Activated CD8-positive, alpha-beta T cell treated with anti-CD3 and anti-CD28 coated beads, Interleukin-2, amount 10 ng/mL, durations not matched to agents 7 days and 5 days (primary cell): ENCODE measurements at regions of chr2 and their contacts with region 1.

Region 1: DNA sequence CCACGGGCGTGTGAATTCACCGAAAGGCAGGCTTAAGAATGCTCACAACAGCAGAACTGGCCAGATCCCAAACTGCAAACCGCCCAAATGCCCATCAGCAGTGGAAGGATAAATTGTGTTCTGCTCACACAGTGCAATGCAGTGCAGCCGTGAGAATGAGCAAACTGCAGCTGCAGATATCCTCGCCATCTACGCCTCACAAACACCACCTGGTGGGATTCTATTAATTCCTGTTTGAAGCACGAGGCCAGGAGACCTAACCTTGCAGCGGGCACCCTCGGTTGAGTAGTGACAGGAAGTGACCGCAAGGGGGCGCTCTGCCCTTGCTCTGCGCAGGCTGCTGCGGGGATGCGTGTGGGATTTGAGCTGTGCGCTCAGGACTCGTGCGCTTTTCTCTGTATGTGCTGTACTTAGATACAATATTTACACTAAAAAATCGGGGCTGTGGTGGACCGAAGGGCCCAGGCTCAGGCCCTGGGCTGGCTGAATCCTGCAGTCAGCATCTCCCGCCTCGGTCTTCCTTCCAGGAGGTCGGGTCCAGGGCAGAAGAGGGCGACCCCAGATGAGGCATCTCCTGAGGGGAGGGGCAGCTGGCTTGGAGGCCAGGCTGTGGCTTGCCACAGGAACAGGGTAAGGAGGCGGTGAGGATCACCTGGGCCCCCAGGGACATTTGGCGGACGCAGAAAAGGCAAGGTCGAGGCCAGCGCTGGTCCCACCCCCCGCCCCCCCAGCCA is 19.8 kb upstream of the PDIA6 start:
- DNase-seq: peak; percentile 86
- ATAC-seq: peak; percentile 88
- H3K4me3 Mint-ChIP-seq: no peak overlapping the region
- H3K27ac Mint-ChIP-seq: no peak overlapping the region
- H3K4me1 Mint-ChIP-seq: peaks cover 5% of the 10 kb centered on the region
- H3K27me3 Mint-ChIP-seq: peaks cover 13% of the 10 kb centered on the region

Region 2: DNA sequence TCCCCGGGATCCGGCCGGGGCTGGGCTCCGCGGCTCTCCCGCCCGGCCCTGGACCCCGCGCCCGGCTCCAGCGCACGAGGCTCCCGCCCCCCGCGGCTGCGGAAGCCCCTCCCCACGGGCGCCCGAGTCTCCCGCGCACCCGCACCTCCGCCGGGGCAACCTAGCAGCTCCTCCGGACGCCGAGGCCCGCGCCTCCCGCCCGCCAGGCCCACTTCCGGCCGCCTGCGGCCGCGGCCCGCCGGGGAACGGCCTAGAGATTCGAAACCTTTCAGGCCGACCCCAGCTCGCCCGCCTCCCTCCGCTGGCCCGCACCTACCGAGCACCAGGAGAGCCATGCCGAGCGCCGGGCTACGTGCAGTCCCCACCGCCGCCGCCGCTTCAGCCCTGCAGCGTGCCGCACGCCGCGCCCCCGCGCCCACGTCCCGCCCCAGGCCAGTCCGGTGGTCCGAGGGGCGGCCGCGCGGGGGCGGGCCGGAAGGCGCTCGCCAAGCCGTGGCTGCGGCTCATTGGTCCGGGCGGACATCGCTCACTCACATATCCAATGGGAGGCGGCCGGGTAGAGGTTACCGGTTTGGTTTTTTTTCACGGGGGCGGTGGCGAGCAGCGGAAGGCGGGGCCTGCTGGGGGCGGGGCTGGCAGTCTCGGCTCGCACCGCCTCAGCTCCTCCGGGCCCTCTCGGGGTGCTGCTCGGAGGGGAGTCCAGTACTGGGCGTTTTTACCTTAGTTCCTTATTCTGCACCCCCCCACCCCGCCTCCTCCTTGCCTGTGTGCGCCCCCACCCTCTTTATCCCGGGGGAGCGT is 19.8 kb before region 1 on chr2 and contains the start of gene PDIA6:
- CTCF ChIA-PET with region 1: interaction called, 18 read pairs
- POLR2A ChIA-PET with region 1: no interaction called
- DNase-seq: peak; percentile 96
- ATAC-seq: peak; percentile 97
- H3K4me3 Mint-ChIP-seq: peak within 1 kb of the TSS; percentile 87
- H3K27ac Mint-ChIP-seq: peak within 1 kb of the TSS; percentile 93
- H3K4me1 Mint-ChIP-seq: peaks cover 36% of the 10 kb centered on the region
- H3K27me3 Mint-ChIP-seq: peaks cover 13% of the 10 kb centered on the region
- total RNA-seq, gene PDIA6: 131 to 138 TPM

Region 3: DNA sequence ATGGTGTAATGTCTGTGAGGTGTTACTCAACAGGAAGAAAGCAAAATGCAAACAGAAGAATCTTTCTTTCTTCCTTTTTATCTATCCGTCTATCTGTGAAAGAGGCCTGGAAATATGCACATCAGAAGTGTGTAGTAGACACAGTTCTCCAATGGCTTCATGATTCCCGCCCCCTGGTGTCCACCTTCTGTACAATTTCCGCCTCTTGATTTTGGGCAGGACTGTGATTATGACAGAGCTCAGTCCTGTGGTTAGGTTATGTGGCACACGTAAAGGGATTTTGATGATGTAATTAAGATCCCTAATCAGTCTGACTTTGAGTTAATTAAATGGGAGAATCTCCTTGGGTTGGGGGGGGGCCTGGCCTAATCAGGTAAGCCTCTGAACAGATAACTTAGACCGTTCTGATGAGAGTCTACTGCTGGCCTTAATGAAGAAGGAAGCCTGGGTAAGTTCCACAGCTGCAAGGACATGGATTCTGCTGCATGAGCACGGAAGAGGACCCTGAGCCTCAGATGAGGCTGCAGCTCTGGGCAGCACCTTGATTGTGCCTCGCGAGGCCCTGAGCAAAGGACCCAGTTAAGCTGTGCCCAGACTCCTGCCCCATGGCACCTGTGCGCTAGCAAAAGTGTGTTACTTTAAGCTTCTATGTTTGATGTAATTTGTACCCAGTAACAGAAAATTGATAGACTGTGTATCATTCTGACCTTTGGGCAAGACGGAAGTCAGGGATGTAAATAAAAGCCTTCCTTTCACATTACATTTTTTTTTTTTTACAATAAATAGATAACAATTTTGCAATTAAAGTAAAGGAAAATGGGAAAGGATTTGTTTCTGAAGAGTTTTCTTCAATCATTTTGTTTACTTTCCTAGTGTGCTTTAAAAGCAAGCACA is 68.1 kb after region 1 on chr2:
- CTCF ChIA-PET with region 1: interaction called, 14 read pairs
- POLR2A ChIA-PET with region 1: no interaction called
- DNase-seq: no peak
- ATAC-seq: no peak
- H3K4me3 Mint-ChIP-seq: no peak overlapping the region
- H3K27ac Mint-ChIP-seq: no peak overlapping the region
- H3K4me1 Mint-ChIP-seq: no peaks in the 10 kb centered on the region
- H3K27me3 Mint-ChIP-seq: peaks cover 10% of the 10 kb centered on the region

Region 4: GRCh38 chr2:10931710-10932255 is 99.4 kb after region 1 on chr2:
- CTCF ChIA-PET with region 1: no interaction called
- POLR2A ChIA-PET with region 1: no interaction called
- DNase-seq: no peak
- ATAC-seq: no peak
- H3K4me3 Mint-ChIP-seq: no peak overlapping the region
- H3K27ac Mint-ChIP-seq: no peak overlapping the region
- H3K4me1 Mint-ChIP-seq: no peaks in the 10 kb centered on the region
- H3K27me3 Mint-ChIP-seq: peaks cover 20% of the 10 kb centered on the region

Region 5: GRCh38 chr2:11124503-11125068 is 292.2 kb after region 1 on chr2:
- CTCF ChIA-PET with region 1: interaction called, 51 read pairs
- POLR2A ChIA-PET with region 1: no interaction called
- DNase-seq: peak; percentile 69
- ATAC-seq: peak; percentile 64
- H3K4me3 Mint-ChIP-seq: no peak overlapping the region
- H3K27ac Mint-ChIP-seq: no peak overlapping the region
- H3K4me1 Mint-ChIP-seq: peaks cover 8% of the 10 kb centered on the region
- H3K27me3 Mint-ChIP-seq: peaks cover 6% of the 10 kb centered on the region